Breast epithelium (tissue), 4 donors: ENCODE measurements at regions of chr16 and their contacts with region 1.

Region 1: GRCh38 chr16:56075732-56076388 is 115.4 kb upstream of the GNAO1 start:
- DNase-seq: no peak
- H3K4me3 ChIP-seq: no peak overlapping the region
- H3K27ac ChIP-seq: no peak overlapping the region
- H3K4me1 ChIP-seq: no peaks in the 10 kb centered on the region
- H3K27me3 ChIP-seq: no peaks in the 10 kb centered on the region
- CTCF ChIP-seq: no peak
- POLR2A ChIP-seq: no peak

Region 2: GRCh38 chr16:56047307-56048234 is 28.3 kb before region 1 on chr16:
- intact Hi-C with region 1: loop called (anchors 1 kb)
- DNase-seq: no peak
- H3K4me3 ChIP-seq: no peak overlapping the region
- H3K27ac ChIP-seq: no peak overlapping the region
- H3K4me1 ChIP-seq: no peaks in the 10 kb centered on the region
- H3K27me3 ChIP-seq: no peaks in the 10 kb centered on the region
- CTCF ChIP-seq: no peak
- POLR2A ChIP-seq: no peak

Region 3: GRCh38 chr16:56093055-56093454 is 17.2 kb after region 1 on chr16:
- intact Hi-C with region 1: no loop called
- DNase-seq: no peak
- H3K4me3 ChIP-seq: no peak overlapping the region
- H3K27ac ChIP-seq: no peak overlapping the region
- H3K4me1 ChIP-seq: no peaks in the 10 kb centered on the region
- H3K27me3 ChIP-seq: no peaks in the 10 kb centered on the region
- CTCF ChIP-seq: no peak
- POLR2A ChIP-seq: no peak